Activated B cell treated with CpG ODN at 0.5 μM for 24 hours (primary cell): ENCODE measurements at regions of chrX and their contacts with region 1.

Region 1: DNA sequence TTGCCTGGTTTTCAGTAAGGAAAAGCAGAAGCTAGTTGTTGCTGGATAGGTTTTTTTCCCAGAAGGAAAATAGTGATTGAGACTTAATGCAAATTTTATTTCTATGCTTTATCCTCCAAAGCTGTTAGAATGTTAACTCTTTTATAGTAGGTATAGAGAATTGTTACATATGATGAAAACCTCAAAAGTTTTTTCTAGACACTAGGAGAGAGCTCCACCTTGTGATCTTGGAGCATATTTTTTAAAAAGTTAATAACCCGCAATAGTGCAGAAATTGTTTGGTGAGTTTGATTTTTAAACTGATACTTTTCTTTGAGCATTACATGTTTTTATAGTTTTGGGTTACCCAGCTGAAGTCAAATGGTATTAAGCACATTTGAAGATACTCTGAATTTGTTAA is 56.5 kb downstream of the STAG2 start:
- DNase-seq: no peak
- ATAC-seq: no peak
- H3K4me3 Mint-ChIP-seq: no peak overlapping the region
- H3K27ac Mint-ChIP-seq: no peak overlapping the region
- H3K4me1 Mint-ChIP-seq: peaks cover 32% of the 10 kb centered on the region
- H3K27me3 Mint-ChIP-seq: no peaks in the 10 kb centered on the region
- CTCF ChIP-seq: no peak

Region 2: GRCh38 chrX:123720483-123720882 is 297.5 kb before region 1 on chrX:
- CTCF ChIA-PET with region 1: no interaction called
- POLR2A ChIA-PET with region 1: no interaction called
- intact Hi-C with region 1: no loop called
- DNase-seq: no peak
- ATAC-seq: no peak
- H3K4me3 Mint-ChIP-seq: no peak overlapping the region
- H3K27ac Mint-ChIP-seq: no peak overlapping the region
- H3K4me1 Mint-ChIP-seq: peaks cover 26% of the 10 kb centered on the region
- H3K27me3 Mint-ChIP-seq: no peaks in the 10 kb centered on the region
- CTCF ChIP-seq: no peak

Region 3: DNA sequence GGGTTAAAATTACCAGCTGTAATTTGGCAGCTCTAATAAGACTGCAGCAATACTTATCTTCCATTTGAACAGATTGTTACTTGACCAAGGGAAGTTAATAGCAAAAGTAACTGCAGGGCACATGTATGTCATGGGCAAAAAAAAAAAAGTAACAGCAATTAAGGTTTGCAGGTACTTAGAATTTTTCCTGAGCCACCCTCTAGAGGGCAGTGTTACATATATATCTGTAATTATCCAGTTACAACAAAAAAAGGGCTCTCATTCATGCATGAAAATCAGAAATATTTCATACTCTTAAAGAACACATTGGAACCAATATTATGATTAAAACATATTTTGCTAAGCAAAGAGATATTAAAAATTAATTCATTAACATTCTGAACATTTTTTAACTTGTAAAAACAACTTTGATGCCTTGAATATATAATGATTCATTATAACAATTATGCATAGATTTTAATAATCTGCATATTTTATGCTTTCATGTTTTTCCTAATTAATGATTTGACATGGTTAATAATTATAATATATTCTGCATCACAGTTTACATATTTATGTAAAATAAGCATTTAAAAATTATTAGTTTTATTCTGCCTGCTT is 133.1 kb before region 1 on chrX:
- CTCF ChIA-PET with region 1: no interaction called
- POLR2A ChIA-PET with region 1: no interaction called
- intact Hi-C with region 1: loop called (anchors 10 kb)
- DNase-seq: no peak
- ATAC-seq: peak; percentile 42
- H3K4me3 Mint-ChIP-seq: no peak overlapping the region
- H3K27ac Mint-ChIP-seq: no peak overlapping the region
- H3K4me1 Mint-ChIP-seq: peaks cover 11% of the 10 kb centered on the region
- H3K27me3 Mint-ChIP-seq: no peaks in the 10 kb centered on the region
- CTCF ChIP-seq: no peak

Region 4: DNA sequence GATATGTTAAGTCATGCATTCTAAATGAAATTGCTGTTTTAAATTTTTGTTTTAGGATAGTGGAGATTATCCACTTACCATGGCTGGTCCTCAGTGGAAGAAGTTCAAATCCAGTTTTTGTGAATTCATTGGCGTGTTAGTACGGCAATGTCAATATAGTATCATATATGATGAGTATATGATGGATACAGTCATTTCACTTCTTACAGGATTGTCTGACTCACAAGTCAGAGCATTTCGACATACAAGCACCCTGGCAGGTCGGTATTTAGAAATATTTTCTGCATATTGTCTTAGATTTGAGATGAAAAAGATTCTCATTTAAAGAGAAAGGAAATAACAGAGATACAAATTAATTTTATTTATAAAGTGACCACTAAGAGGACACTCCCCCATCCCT is 27.1 kb after region 1 on chrX:
- CTCF ChIA-PET with region 1: no interaction called
- POLR2A ChIA-PET with region 1: no interaction called
- intact Hi-C with region 1: no loop called
- DNase-seq: no peak
- ATAC-seq: no peak
- H3K4me3 Mint-ChIP-seq: no peak overlapping the region
- H3K27ac Mint-ChIP-seq: no peak overlapping the region
- H3K4me1 Mint-ChIP-seq: no peaks in the 10 kb centered on the region
- H3K27me3 Mint-ChIP-seq: no peaks in the 10 kb centered on the region
- CTCF ChIP-seq: no peak